Activated CD4-positive, alpha-beta memory T cell treated with anti-CD3 and anti-CD28 coated beads, Interleukin-2, amount 10 ng/mL, durations not matched to agents 7 days and 5 days (primary cell): ENCODE measurements at regions of chr9 and their contacts with region 1.

Region 1: GRCh38 chr9:122099271-122099869 is 6.3 kb upstream of the TTLL11 start:
- DNase-seq: peak; percentile 82
- H3K4me3 Mint-ChIP-seq: peak overlapping the region; percentile 49
- H3K27ac Mint-ChIP-seq: no peak overlapping the region
- H3K4me1 Mint-ChIP-seq: peaks cover 14% of the 10 kb centered on the region
- H3K27me3 Mint-ChIP-seq: peaks cover 30% of the 10 kb centered on the region

Region 2: GRCh38 chr9:122050167-122050566 is 49.2 kb before region 1 on chr9:
- CTCF ChIA-PET with region 1: no interaction called
- POLR2A ChIA-PET with region 1: no interaction called
- DNase-seq: no peak
- H3K4me3 Mint-ChIP-seq: no peak overlapping the region
- H3K27ac Mint-ChIP-seq: no peak overlapping the region
- H3K4me1 Mint-ChIP-seq: peaks cover 10% of the 10 kb centered on the region
- H3K27me3 Mint-ChIP-seq: no peaks in the 10 kb centered on the region

Region 3: GRCh38 chr9:122087406-122088200 is 11.8 kb before region 1 on chr9:
- CTCF ChIA-PET with region 1: interaction called, 32 read pairs
- POLR2A ChIA-PET with region 1: no interaction called
- DNase-seq: no peak
- H3K4me3 Mint-ChIP-seq: no peak overlapping the region
- H3K27ac Mint-ChIP-seq: no peak overlapping the region
- H3K4me1 Mint-ChIP-seq: peaks cover 15% of the 10 kb centered on the region
- H3K27me3 Mint-ChIP-seq: no peaks in the 10 kb centered on the region

Region 4: GRCh38 chr9:122116040-122116439 is 16.7 kb after region 1 on chr9:
- CTCF ChIA-PET with region 1: interaction called, 173 read pairs
- POLR2A ChIA-PET with region 1: no interaction called
- DNase-seq: no peak
- H3K4me3 Mint-ChIP-seq: no peak overlapping the region
- H3K27ac Mint-ChIP-seq: no peak overlapping the region
- H3K4me1 Mint-ChIP-seq: no peaks in the 10 kb centered on the region
- H3K27me3 Mint-ChIP-seq: peaks cover 2% of the 10 kb centered on the region

Region 5: DNA sequence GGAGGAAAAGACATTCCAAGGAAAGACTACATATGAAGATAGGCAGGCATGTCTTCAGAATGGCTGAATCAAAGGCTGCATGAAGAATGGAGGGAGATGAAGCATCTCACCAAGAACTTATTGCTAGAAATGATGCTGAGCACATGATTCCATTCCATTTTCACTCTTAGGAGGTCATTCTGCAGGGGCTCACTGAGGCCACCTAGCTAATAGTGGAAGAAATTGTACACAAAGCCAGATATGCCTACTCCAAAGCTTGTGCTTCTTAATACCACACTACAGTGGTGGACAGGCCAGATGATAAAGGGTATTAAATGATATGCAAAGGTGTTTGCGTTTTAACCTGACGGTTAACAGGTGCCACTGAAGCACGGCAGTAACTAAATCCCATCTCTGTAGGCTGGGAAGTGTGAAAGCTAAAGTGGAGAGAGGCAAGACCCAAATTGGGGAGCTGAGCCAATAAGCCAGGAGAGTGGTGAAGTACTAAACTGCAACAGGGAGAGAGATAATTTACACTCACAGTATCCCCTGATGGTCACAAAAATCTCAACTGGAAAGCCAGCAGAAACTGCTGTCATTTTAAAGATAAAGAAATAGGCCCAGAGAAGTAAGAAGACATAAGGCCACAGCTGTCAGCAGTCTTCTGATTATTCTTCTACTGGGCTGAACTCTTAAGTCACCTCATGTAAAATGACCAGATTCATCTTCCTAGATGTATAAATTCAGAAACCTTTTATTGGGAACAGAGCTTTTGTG is 45.6 kb after region 1 on chr9:
- CTCF ChIA-PET with region 1: interaction called, 23 read pairs
- POLR2A ChIA-PET with region 1: no interaction called
- DNase-seq: no peak
- H3K4me3 Mint-ChIP-seq: no peak overlapping the region
- H3K27ac Mint-ChIP-seq: no peak overlapping the region
- H3K4me1 Mint-ChIP-seq: no peaks in the 10 kb centered on the region
- H3K27me3 Mint-ChIP-seq: no peaks in the 10 kb centered on the region

Region 6: DNA sequence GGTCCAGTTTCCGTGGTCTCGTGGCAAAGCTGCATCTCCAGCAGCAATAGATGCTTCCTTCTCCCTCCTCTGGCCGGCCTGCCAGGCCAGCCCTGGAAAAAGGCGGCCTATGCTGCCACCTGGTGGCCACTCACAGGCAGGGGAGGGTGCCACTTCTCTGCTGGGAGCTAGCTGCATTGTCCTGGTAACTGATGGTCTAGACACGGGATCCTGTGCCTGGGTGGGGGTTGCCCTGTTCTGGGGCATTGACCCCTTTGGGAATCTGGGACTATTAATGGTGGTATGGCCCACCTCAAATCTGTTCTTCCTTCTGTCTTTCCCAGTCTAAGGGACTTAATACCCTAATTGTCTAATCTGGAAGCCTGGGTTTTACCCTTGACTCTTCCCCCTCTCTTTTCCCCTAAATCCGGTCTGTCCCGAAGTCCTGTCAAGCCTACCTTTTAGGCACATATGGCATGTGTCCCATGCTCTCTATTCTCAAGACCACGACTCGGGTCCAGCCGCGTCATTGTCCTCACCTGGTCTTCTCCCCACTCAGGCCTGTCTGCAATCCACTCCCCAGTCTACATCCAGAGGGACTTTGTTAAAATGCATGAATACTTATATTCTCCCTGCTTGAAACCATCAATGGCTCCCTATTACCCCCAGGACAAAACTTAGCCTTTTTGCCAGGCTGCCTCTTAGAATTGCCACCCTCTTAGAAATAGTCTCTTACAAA is 251.4 kb after region 1 on chr9:
- CTCF ChIA-PET with region 1: interaction called, 105 read pairs
- POLR2A ChIA-PET with region 1: interaction called, 3 read pairs
- DNase-seq: peak; percentile 82
- H3K4me3 Mint-ChIP-seq: no peak overlapping the region
- H3K27ac Mint-ChIP-seq: no peak overlapping the region
- H3K4me1 Mint-ChIP-seq: peaks cover 13% of the 10 kb centered on the region
- H3K27me3 Mint-ChIP-seq: peaks cover 31% of the 10 kb centered on the region